HCT116 (cell line): ENCODE measurements at regions of chr9 and their contacts with region 1.

Region 1: GRCh38 chr9:86637515-86637914 is 283.3 kb upstream of the TUT7 start:
- DNase-seq: no peak
- ATAC-seq: peak; percentile 77
- H3K4me3 ChIP-seq: no peak overlapping the region
- H3K27ac ChIP-seq: no peak overlapping the region
- H3K4me1 ChIP-seq: no peaks in the 10 kb centered on the region
- H3K27me3 ChIP-seq: peaks cover 17% of the 10 kb centered on the region; the same call in 1 of the 2 replicates
- CTCF ChIP-seq: peak; percentile 35 to 88 (median 78); a peak in 5 of 6 replicates
- POLR2A ChIP-seq: no peak
- RAD21 ChIP-seq: peak; percentile 77

Region 2: GRCh38 chr9:86044001-86044400 is 593.5 kb before region 1 on chr9:
- CTCF ChIA-PET with region 1: no interaction called
- POLR2A ChIA-PET with region 1: no interaction called
- RAD21 ChIA-PET with region 1: no interaction called
- intact Hi-C with region 1: no loop called
- DNase-seq: peak; percentile 7
- ATAC-seq: peak; percentile 68
- H3K4me3 ChIP-seq: no peak overlapping the region
- H3K27ac ChIP-seq: no peak overlapping the region
- H3K4me1 ChIP-seq: no peaks in the 10 kb centered on the region
- H3K27me3 ChIP-seq: no peaks in the 10 kb centered on the region
- CTCF ChIP-seq: peak; percentile 42 to 61 (median 47); a peak in 5 of 6 replicates
- POLR2A ChIP-seq: no peak
- RAD21 ChIP-seq: peak; percentile 51

Region 3: GRCh38 chr9:86062845-86063693 is 574.4 kb before region 1 on chr9:
- CTCF ChIA-PET with region 1: no interaction called
- POLR2A ChIA-PET with region 1: no interaction called
- RAD21 ChIA-PET with region 1: no interaction called
- intact Hi-C with region 1: no loop called
- DNase-seq: no peak
- ATAC-seq: no peak
- H3K4me3 ChIP-seq: no peak overlapping the region
- H3K27ac ChIP-seq: no peak overlapping the region
- H3K4me1 ChIP-seq: no peaks in the 10 kb centered on the region
- H3K27me3 ChIP-seq: no peaks in the 10 kb centered on the region
- CTCF ChIP-seq: no peak
- POLR2A ChIP-seq: no peak
- RAD21 ChIP-seq: no peak

Region 4: GRCh38 chr9:86500667-86501435 is 136.7 kb before region 1 on chr9:
- CTCF ChIA-PET with region 1: no interaction called
- POLR2A ChIA-PET with region 1: no interaction called
- RAD21 ChIA-PET with region 1: no interaction called
- intact Hi-C with region 1: no loop called
- DNase-seq: no peak
- ATAC-seq: no peak
- H3K4me3 ChIP-seq: no peak overlapping the region
- H3K27ac ChIP-seq: no peak overlapping the region
- H3K4me1 ChIP-seq: no peaks in the 10 kb centered on the region
- H3K27me3 ChIP-seq: peaks cover 49% of the 10 kb centered on the region
- CTCF ChIP-seq: no peak
- POLR2A ChIP-seq: no peak
- RAD21 ChIP-seq: no peak

Region 5: GRCh38 chr9:86714999-86715398 is 77.5 kb after region 1 on chr9:
- CTCF ChIA-PET with region 1: no interaction called
- POLR2A ChIA-PET with region 1: no interaction called
- RAD21 ChIA-PET with region 1: no interaction called
- intact Hi-C with region 1: no loop called
- DNase-seq: no peak
- ATAC-seq: no peak
- H3K4me3 ChIP-seq: no peak overlapping the region
- H3K27ac ChIP-seq: no peak overlapping the region
- H3K4me1 ChIP-seq: no peaks in the 10 kb centered on the region
- H3K27me3 ChIP-seq: peaks cover 60% of the 10 kb centered on the region
- CTCF ChIP-seq: no peak
- POLR2A ChIP-seq: no peak
- RAD21 ChIP-seq: no peak

Region 6: GRCh38 chr9:86948074-86948929 is 310.8 kb after region 1 on chr9:
- CTCF ChIA-PET with region 1: interaction called, 10 read pairs
- POLR2A ChIA-PET with region 1: no interaction called
- RAD21 ChIA-PET with region 1: interaction called in 1 of 2 experiments, 3 read pairs
- intact Hi-C with region 1: no loop called
- DNase-seq: peak; percentile 47
- ATAC-seq: peak; percentile 77
- H3K4me3 ChIP-seq: peak overlapping the region; percentile 47 to 57
- H3K27ac ChIP-seq: no peak overlapping the region
- H3K4me1 ChIP-seq: peaks cover 7 to 16% of the 10 kb centered on the region in 2 experiments; a peak in 2 of 4 replicates
- H3K27me3 ChIP-seq: peaks cover 21% of the 10 kb centered on the region
- CTCF ChIP-seq: peak; percentile 10 to 81 (median 77); a peak in 5 of 6 replicates
- POLR2A ChIP-seq: no peak
- RAD21 ChIP-seq: peak; percentile 41

Region 7: GRCh38 chr9:86997158-86997557 is 359.6 kb after region 1 on chr9:
- CTCF ChIA-PET with region 1: interaction called, 3 read pairs
- POLR2A ChIA-PET with region 1: no interaction called
- RAD21 ChIA-PET with region 1: no interaction called
- intact Hi-C with region 1: loop called (anchors 5 kb)
- DNase-seq: peak; percentile 6
- ATAC-seq: no peak
- H3K4me3 ChIP-seq: no peak overlapping the region
- H3K27ac ChIP-seq: no peak overlapping the region
- H3K4me1 ChIP-seq: no peaks in the 10 kb centered on the region
- H3K27me3 ChIP-seq: peaks cover 8% of the 10 kb centered on the region
- CTCF ChIP-seq: no peak
- POLR2A ChIP-seq: no peak
- RAD21 ChIP-seq: peak; percentile 32; the same call in 1 of the 2 replicates